Naive thymus-derived CD4-positive, alpha-beta T cell (primary cell): ENCODE measurements at regions of chr19 and their contacts with region 1.

Region 1: DNA sequence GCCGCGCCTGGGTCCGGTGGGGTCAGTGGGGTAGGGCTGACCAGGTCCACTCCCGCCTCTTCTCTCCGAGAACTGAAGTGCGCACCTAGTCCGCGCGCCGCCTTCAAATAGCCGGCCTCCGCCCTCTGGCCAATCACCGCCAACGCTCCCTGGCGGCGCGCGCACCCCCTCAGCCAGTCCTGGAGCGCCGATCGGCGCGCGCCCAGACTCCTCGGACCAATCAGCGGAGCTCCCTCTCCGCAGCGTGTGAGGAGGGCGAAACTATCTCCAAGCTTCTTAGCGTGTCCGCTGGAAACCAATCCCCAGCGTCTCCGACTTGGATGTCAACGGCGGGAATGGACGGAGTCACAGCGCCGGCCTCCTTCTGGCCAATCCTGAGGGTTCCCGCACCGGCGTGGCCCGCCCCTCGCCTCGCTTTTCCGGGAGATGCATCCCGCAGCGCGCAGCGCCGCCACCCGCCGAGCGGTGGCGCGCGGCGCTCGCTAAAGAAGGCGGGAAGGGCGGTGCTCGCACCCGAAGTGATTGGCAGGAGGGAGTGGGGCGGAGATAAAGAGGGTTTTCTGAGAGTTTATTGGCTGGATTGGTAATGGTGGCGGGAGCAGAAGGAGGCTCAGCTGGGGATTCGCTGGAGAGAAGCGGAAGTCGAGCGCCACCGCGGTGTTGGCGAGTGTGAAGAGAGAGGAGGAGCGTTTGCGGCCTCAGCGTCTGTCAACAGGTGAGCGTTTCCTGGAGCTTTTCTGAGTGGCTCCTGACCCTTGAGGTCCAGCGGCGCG is at the start of gene ASF1B:
- DNase-seq: peak; percentile 94 to 99 (median 99)
- ATAC-seq: peak; percentile 88
- H3K4me3 ChIP-seq: peak within 1 kb of the TSS; percentile 87
- H3K4me3 Mint-ChIP-seq: peak within 1 kb of the TSS; percentile 84 to 97 (median 88)
- H3K27ac ChIP-seq: peak within 1 kb of the TSS; percentile 90
- H3K27ac Mint-ChIP-seq: peak within 1 kb of the TSS; percentile 88 to 97 (median 93)
- H3K4me1 ChIP-seq: peaks cover 8 to 15% of the 10 kb centered on the region in 2 donors
- H3K4me1 Mint-ChIP-seq: peaks cover 0 to 43% (median 34%) of the 10 kb centered on the region in 7 donors
- H3K27me3 ChIP-seq: no peaks in the 10 kb centered on the region
- H3K27me3 Mint-ChIP-seq: no peaks in the 10 kb centered on the region
- total RNA-seq, gene ASF1B: 0.98 to 79.0 (median 2.1) TPM

Region 2: GRCh38 chr19:13774217-13775191 is 362.2 kb before region 1 on chr19 and contains the start of gene C19orf53:
- CTCF ChIA-PET with region 1: no interaction called
- POLR2A ChIA-PET with region 1: no interaction called
- intact Hi-C with region 1: loop called in 1 of 2 experiments (anchors 1 kb)
- DNase-seq: peak; percentile 74 to 89 (median 86)
- ATAC-seq: peak; percentile 99
- H3K4me3 ChIP-seq: peak within 1 kb of the TSS; percentile 94
- H3K4me3 Mint-ChIP-seq: peak within 1 kb of the TSS; percentile 90 to 100 (median 99)
- H3K27ac ChIP-seq: peak within 1 kb of the TSS; percentile 90
- H3K27ac Mint-ChIP-seq: peak within 1 kb of the TSS; percentile 92 to 100 (median 97)
- H3K4me1 ChIP-seq: peaks cover 9 to 15% of the 10 kb centered on the region in 2 donors
- H3K4me1 Mint-ChIP-seq: peaks cover 10 to 37% (median 28%) of the 10 kb centered on the region in 7 donors
- H3K27me3 ChIP-seq: no peaks in the 10 kb centered on the region
- H3K27me3 Mint-ChIP-seq: no peaks in the 10 kb centered on the region
- total RNA-seq, gene C19orf53: 57.2 to 108 (median 86.2) TPM

Region 3: GRCh38 chr19:14073261-14073924 is 63.3 kb before region 1 on chr19:
- CTCF ChIA-PET with region 1: interaction called, 5 read pairs
- POLR2A ChIA-PET with region 1: interaction called, 8 read pairs
- intact Hi-C with region 1: loop called (anchors 1 to 2 kb)
- DNase-seq: peak; percentile 65 to 91 (median 87)
- ATAC-seq: peak; percentile 86
- H3K4me3 ChIP-seq: peak overlapping the region; percentile 91
- H3K4me3 Mint-ChIP-seq: peak overlapping the region; percentile 87 to 99 (median 93)
- H3K27ac ChIP-seq: peak overlapping the region; percentile 50
- H3K27ac Mint-ChIP-seq: peak overlapping the region in 7 of 9 donors; percentile 62 to 89 (median 78)
- H3K4me1 ChIP-seq: peaks cover 9 to 18% of the 10 kb centered on the region in 2 donors
- H3K4me1 Mint-ChIP-seq: peaks cover 7 to 24% (median 10%) of the 10 kb centered on the region in 7 donors
- H3K27me3 ChIP-seq: no peaks in the 10 kb centered on the region
- H3K27me3 Mint-ChIP-seq: peaks cover 0 to 10% (median 0%) of the 10 kb centered on the region in 5 donors

Region 4: GRCh38 chr19:14147797-14148605 is 11.3 kb after region 1 on chr19:
- CTCF ChIA-PET with region 1: interaction called, 14 read pairs
- POLR2A ChIA-PET with region 1: interaction called, 19 read pairs
- intact Hi-C with region 1: loop called (anchors 1 kb)
- DNase-seq: peak in 7 of 9 donors; percentile 23 to 51 (median 38)
- ATAC-seq: peak; percentile 79
- H3K4me3 ChIP-seq: no peak overlapping the region
- H3K4me3 Mint-ChIP-seq: peak overlapping the region in 9 of 10 donors; percentile 57 to 95 (median 82)
- H3K27ac ChIP-seq: peak overlapping the region; percentile 91
- H3K27ac Mint-ChIP-seq: peak overlapping the region; percentile 92 to 99 (median 99)
- H3K4me1 ChIP-seq: peaks cover 23 to 30% of the 10 kb centered on the region in 2 donors
- H3K4me1 Mint-ChIP-seq: peaks cover 13 to 67% (median 44%) of the 10 kb centered on the region in 7 donors
- H3K27me3 ChIP-seq: no peaks in the 10 kb centered on the region
- H3K27me3 Mint-ChIP-seq: no peaks in the 10 kb centered on the region

Region 5: GRCh38 chr19:14383661-14384555 is 247.2 kb after region 1 on chr19:
- CTCF ChIA-PET with region 1: interaction called, 4 read pairs
- POLR2A ChIA-PET with region 1: interaction called, 6 read pairs
- intact Hi-C with region 1: loop called in 1 of 2 experiments (anchors 1 kb)
- DNase-seq: peak in 2 of 9 donors; percentile 69 to 81
- ATAC-seq: peak; percentile 4
- H3K4me3 ChIP-seq: peak overlapping the region; percentile 95
- H3K4me3 Mint-ChIP-seq: peak overlapping the region; percentile 89 to 100 (median 94)
- H3K27ac ChIP-seq: peak overlapping the region; percentile 98
- H3K27ac Mint-ChIP-seq: peak overlapping the region; percentile 96 to 99 (median 97)
- H3K4me1 ChIP-seq: peaks cover 24 to 28% of the 10 kb centered on the region in 2 donors
- H3K4me1 Mint-ChIP-seq: peaks cover 36 to 51% (median 47%) of the 10 kb centered on the region in 7 donors
- H3K27me3 ChIP-seq: no peaks in the 10 kb centered on the region
- H3K27me3 Mint-ChIP-seq: peaks cover 0 to 3% (median 0%) of the 10 kb centered on the region in 5 donors

Region 6: DNA sequence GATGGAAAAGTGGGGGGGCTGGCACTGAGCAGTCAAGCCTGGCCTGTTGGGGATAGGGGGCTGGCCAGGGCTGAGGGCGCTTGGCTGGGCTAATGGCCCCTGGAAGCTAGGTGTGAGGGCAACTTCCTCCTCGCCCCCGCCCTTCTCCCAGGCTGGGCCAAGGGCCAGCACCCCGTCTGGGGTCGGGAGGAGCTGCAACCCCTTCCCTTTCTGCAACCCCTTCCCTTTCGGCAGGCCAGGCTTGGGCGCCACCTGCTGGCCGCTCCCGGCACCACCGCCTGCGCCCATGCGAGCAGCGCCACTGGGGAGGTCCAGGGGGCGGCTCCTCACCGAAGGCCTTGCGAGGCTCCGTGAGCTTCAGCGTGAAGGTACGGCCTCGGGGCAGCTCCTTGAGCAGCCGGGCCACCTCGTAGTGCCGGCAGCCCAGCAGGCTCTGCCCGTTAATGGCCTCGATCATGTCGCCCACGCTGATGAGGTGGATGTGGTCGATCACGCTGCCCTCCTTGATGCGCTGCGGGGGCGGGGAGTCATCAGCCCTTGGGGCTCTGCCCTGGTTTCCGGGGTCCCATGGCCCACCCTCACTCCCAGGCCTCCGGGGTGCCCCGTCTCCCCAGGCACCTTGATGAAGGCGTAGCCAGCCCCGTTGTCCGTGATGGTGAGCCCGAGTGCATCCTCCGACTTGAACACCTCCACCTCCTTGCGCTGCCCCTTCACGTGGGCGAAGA is 343.4 kb after region 1 on chr19:
- CTCF ChIA-PET with region 1: interaction called, 8 read pairs
- POLR2A ChIA-PET with region 1: no interaction called
- intact Hi-C with region 1: loop called (anchors 1 to 5 kb)
- DNase-seq: peak; percentile 47 to 87 (median 65)
- ATAC-seq: peak; percentile 67
- H3K4me3 ChIP-seq: no peak overlapping the region
- H3K4me3 Mint-ChIP-seq: no peak overlapping the region
- H3K27ac ChIP-seq: no peak overlapping the region
- H3K27ac Mint-ChIP-seq: no peak overlapping the region
- H3K4me1 ChIP-seq: peaks cover under 1% of the 10 kb centered on the region in 2 donors
- H3K4me1 Mint-ChIP-seq: peaks cover 0 to 17% (median 11%) of the 10 kb centered on the region in 7 donors
- H3K27me3 ChIP-seq: no peaks in the 10 kb centered on the region
- H3K27me3 Mint-ChIP-seq: peaks cover 0 to under 1% (median 0%) of the 10 kb centered on the region in 5 donors

Region 7: DNA sequence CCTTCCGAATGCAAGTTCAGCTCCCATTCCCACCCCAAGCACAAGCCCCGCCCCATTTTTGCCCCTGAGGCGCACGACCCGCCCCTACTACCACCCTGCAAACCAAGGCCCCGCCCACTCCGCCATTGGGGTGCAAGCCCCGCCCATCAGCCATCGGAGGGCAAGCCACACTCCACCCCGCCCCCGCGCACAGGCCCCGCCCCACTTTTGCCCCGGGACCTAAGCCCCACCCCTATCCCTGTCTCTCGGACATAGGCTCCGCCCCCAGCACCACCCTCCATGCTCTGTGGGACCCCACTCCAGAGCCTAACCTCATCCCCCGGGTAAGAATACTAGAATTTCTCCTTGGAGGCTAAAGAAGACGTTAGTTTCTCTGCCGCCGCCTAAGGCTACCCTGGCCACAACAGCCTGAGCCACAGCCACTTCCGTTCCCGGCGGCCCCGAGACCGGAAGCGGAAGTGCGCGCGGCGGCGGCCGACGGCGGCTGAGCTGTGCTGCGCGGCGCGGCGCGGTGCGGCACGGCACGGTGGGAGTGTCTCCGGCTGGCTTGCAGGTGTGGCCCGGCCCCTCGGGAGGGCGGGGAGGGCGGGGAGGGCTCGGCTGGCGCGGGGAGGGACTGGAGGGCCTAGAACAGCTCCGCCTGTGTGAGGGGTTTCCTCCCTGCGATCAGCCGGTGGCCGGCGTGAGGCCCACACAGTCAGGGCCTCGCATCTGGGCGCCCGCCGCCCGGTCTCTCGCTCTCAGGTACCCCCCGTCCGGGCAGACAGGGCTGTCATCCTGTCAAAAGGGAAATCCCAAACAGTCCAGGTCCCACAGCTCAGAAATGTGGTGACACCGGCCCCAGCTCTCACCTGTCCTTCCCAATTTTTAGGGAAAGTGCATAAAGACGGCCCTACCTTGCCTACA is 553.2 kb after region 1 on chr19 and contains the start of gene ZNF333:
- CTCF ChIA-PET with region 1: no interaction called
- POLR2A ChIA-PET with region 1: interaction called, 3 read pairs
- intact Hi-C with region 1: loop called (anchors 1 to 5 kb)
- DNase-seq: peak; percentile 92 to 99 (median 96)
- ATAC-seq: peak; percentile 94
- H3K4me3 ChIP-seq: peak within 1 kb of the TSS; percentile 93
- H3K4me3 Mint-ChIP-seq: peak within 1 kb of the TSS; percentile 81 to 99 (median 94)
- H3K27ac ChIP-seq: peak within 1 kb of the TSS; percentile 97
- H3K27ac Mint-ChIP-seq: peak within 1 kb of the TSS; percentile 93 to 100 (median 99)
- H3K4me1 ChIP-seq: peaks cover 6 to 16% of the 10 kb centered on the region in 2 donors
- H3K4me1 Mint-ChIP-seq: peaks cover 5 to 26% (median 23%) of the 10 kb centered on the region in 7 donors
- H3K27me3 ChIP-seq: no peaks in the 10 kb centered on the region
- H3K27me3 Mint-ChIP-seq: peaks cover 0 to 2% (median 0%) of the 10 kb centered on the region in 5 donors
- total RNA-seq, gene ZNF333: 15.4 to 56.3 (median 34.7) TPM